ENCODE measurements at regions of chr4 and their contacts with region 1.

Region 1: GRCh38 chr4:25312496-25313200 is at the start of gene ZCCHC4:
- DNase-seq: peak; percentile 54
- H3K4me3 ChIP-seq: peak within 1 kb of the TSS; percentile 99
- CTCF ChIP-seq: peak; percentile 99

Region 2: GRCh38 chr4:25159884-25160713 is 152.5 kb before region 1 on chr4 and contains the start of gene SEPSECS:
- CTCF ChIA-PET with region 1: interaction called, 21 read pairs
- POLR2A ChIA-PET with region 1: no interaction called
- DNase-seq: peak; percentile 70
- H3K4me3 ChIP-seq: peak within 1 kb of the TSS; percentile 84
- CTCF ChIP-seq: no peak

Region 3: DNA sequence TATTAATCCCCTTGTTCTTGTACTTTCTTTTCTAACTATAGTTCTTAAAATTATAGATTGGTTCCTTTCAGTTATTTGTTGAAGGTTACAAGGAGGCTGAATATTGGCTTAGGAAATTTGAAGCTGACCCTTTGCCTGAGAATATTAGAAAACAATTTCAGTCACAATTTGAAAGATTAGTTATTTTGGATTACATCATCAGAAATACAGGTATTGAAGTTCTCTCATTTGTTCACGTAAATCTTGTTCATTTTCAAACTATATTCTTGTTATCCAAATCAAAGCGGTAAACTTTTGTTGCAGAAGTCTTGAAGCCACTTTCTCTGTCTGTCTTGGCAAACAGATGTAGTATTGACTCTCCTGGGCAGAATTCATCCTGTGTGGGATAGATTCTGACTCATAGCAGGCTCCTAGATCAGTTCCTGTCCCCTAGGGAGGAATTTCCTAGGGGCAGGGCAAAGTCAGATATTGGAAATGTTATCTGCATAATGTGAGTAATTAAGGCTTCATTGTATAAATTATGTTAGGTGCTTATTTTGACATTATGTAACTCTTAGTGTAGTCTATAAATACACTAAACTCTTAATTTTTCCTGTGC is 53.6 kb before region 1 on chr4:
- CTCF ChIA-PET with region 1: interaction called, 12 read pairs
- POLR2A ChIA-PET with region 1: no interaction called
- DNase-seq: peak; percentile 3
- H3K4me3 ChIP-seq: no peak overlapping the region
- CTCF ChIP-seq: no peak

Region 4: GRCh38 chr4:25290490-25291067 is 22.1 kb before region 1 on chr4:
- CTCF ChIA-PET with region 1: interaction called, 40 read pairs
- POLR2A ChIA-PET with region 1: interaction called, 3 read pairs
- DNase-seq: no peak
- H3K4me3 ChIP-seq: no peak overlapping the region
- CTCF ChIP-seq: no peak

Region 5: DNA sequence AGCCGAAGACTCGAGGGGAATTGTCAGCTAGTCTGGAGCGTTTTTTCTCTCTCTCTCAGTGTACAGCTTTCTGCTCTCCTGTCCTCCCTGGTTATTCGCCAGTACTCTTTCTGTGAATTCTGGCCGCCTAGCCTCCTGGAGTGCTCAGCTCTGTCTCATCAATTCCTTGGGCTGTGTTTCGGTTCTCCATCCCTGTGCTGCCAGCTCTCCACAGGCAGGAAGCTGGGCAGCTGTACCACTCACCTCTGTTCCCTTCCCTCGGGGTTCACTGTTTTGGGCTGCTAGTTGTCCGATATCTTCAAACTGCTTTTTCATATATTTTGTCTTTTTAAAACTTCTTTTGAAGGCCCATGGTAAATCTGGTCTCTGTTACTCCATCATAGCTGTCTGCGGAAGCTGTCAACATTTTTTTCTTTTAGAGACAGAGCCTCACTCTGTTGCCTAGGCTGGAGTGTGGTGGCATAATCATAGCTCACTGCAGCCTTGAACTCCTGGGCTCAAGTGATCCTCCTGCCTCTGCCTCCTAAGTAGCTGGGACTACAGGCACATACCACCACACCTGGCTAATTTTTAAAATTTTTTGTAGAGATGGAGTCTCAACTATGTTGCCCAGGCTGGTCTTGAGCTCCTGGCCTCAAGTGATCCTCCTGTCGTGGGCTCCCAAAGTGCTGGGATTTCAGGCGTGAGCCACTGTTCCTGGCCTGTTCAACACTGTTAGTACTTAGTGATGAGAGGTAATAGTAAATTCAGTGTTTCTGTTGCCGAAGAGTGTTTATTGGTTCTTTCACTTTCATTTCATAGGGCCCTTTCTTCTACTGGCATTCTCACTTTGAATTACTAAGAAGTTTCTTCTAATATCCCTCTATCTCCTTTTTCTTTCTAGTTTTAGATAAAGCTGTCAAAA is 18.5 kb after region 1 on chr4:
- CTCF ChIA-PET with region 1: interaction called, 44 read pairs
- POLR2A ChIA-PET with region 1: no interaction called
- DNase-seq: no peak
- H3K4me3 ChIP-seq: no peak overlapping the region
- CTCF ChIP-seq: no peak

Region 6: DNA sequence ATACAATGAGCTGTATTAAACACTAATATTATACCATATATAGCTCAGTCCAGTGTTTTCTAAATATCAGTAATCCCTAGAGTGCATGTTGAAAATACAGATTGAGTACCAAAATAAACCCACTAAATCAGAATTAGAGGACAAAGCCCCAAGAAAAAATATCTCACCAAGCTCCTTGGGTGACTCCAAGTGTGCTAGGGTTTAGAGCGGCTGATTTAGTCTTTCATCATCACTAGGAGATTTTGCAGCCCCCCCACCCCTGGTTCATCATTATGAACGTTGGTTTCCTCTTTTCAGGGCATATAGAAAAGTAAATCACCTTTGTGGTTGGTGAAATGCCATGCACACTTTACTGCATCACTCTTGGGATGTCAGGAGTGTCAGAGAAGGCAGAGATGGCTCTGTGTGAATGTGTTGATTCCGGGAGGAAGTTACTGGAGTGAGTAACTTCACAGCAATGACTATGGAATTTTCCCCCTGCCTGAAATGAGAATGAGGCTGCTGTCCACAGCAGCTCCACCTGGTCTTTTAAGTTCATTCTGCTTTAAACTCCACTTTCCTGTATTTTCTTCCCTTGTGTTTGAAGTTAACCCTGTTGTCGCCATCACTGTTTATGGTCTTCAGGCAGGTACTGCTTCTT is 39.2 kb after region 1 on chr4:
- CTCF ChIA-PET with region 1: interaction called, 27 read pairs
- POLR2A ChIA-PET with region 1: no interaction called
- DNase-seq: peak; percentile 28
- H3K4me3 ChIP-seq: no peak overlapping the region
- CTCF ChIP-seq: no peak

Region 7: GRCh38 chr4:25367004-25367621 is 54.5 kb after region 1 on chr4:
- CTCF ChIA-PET with region 1: interaction called, 68 read pairs
- POLR2A ChIA-PET with region 1: no interaction called
- DNase-seq: no peak
- H3K4me3 ChIP-seq: no peak overlapping the region
- CTCF ChIP-seq: no peak